CD8-positive, alpha-beta T cell (primary cell): ENCODE measurements at regions of chrX and their contacts with region 1.

Region 1: DNA sequence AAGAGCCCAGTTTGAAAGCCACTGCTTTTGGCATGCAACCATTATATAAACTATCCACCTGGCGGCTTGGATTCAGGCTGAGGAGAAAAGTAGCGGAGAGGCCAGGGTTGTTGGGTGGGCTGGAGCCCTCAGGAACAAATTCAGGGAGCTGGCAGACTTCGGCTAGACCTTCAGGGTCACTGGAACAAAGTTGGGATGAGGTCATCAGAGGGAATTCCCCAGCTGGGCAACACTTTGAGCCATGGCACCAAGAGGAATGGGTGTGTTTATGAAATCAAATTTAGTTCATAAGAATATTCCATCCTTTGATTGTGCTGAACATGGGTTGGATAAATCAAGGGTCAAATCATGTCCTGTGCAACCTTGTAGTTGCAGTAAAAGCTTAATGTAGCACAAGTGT is 22.0 kb downstream of the MTMR1 start:
- DNase-seq: no peak
- ATAC-seq: no peak
- H3K4me3 ChIP-seq: no peak overlapping the region
- H3K4me3 Mint-ChIP-seq: no peak overlapping the region
- H3K27ac ChIP-seq: no peak overlapping the region
- H3K27ac Mint-ChIP-seq: peak overlapping the region; percentile 49
- H3K4me1 ChIP-seq: no peaks in the 10 kb centered on the region
- H3K4me1 Mint-ChIP-seq: peaks cover 50% of the 10 kb centered on the region
- H3K27me3 ChIP-seq: no peaks in the 10 kb centered on the region
- H3K27me3 Mint-ChIP-seq: no peaks in the 10 kb centered on the region
- CTCF ChIP-seq: no peak

Region 2: GRCh38 chrX:150664290-150664689 is 50.9 kb before region 1 on chrX:
- CTCF ChIA-PET with region 1: no interaction called
- POLR2A ChIA-PET with region 1: no interaction called
- intact Hi-C with region 1: loop called (anchors 10 kb)
- DNase-seq: no peak
- ATAC-seq: no peak
- H3K4me3 ChIP-seq: no peak overlapping the region
- H3K4me3 Mint-ChIP-seq: no peak overlapping the region
- H3K27ac ChIP-seq: no peak overlapping the region
- H3K27ac Mint-ChIP-seq: no peak overlapping the region
- H3K4me1 ChIP-seq: no peaks in the 10 kb centered on the region
- H3K4me1 Mint-ChIP-seq: no peaks in the 10 kb centered on the region
- H3K27me3 ChIP-seq: no peaks in the 10 kb centered on the region
- H3K27me3 Mint-ChIP-seq: no peaks in the 10 kb centered on the region
- CTCF ChIP-seq: no peak

Region 3: DNA sequence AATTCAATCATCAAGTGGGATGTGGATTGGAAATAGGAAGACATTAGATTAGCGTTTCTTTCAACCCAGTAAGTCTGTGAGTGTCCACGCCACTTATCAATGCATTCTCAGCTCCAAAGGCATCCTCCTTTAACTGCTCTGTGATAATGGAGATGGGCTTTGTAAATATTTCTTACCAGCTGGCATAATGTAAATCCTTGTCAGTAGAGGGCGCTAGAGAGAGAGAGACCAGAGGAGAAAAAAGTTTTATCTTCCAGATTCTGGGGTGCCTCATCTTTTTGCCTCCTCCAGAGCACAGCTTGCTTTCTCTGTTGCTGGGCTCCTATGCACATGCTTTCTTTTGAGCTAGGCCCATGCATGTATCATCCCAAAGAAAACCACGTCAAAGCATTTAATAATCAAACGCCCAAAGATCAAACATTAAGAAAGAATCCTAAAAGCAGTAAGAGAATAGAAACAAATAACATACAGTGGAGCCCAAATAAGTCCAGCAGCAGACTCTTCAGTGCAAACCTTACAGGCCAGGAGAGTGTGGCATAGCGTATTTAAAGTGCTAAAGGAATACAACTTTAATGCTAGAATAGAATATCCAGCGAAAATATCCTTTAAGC is 31.5 kb before region 1 on chrX:
- CTCF ChIA-PET with region 1: interaction called, 55 read pairs
- POLR2A ChIA-PET with region 1: no interaction called
- intact Hi-C with region 1: loop called (anchors 1 kb)
- DNase-seq: peak in 4 of 9 experiments; percentile 23 to 74 (median 48)
- ATAC-seq: peak; percentile 62
- H3K4me3 ChIP-seq: no peak overlapping the region
- H3K4me3 Mint-ChIP-seq: no peak overlapping the region
- H3K27ac ChIP-seq: no peak overlapping the region
- H3K27ac Mint-ChIP-seq: no peak overlapping the region
- H3K4me1 ChIP-seq: peaks cover 10% of the 10 kb centered on the region
- H3K4me1 Mint-ChIP-seq: peaks cover 10% of the 10 kb centered on the region
- H3K27me3 ChIP-seq: no peaks in the 10 kb centered on the region
- H3K27me3 Mint-ChIP-seq: no peaks in the 10 kb centered on the region
- CTCF ChIP-seq: peak; percentile 59

Region 4: DNA sequence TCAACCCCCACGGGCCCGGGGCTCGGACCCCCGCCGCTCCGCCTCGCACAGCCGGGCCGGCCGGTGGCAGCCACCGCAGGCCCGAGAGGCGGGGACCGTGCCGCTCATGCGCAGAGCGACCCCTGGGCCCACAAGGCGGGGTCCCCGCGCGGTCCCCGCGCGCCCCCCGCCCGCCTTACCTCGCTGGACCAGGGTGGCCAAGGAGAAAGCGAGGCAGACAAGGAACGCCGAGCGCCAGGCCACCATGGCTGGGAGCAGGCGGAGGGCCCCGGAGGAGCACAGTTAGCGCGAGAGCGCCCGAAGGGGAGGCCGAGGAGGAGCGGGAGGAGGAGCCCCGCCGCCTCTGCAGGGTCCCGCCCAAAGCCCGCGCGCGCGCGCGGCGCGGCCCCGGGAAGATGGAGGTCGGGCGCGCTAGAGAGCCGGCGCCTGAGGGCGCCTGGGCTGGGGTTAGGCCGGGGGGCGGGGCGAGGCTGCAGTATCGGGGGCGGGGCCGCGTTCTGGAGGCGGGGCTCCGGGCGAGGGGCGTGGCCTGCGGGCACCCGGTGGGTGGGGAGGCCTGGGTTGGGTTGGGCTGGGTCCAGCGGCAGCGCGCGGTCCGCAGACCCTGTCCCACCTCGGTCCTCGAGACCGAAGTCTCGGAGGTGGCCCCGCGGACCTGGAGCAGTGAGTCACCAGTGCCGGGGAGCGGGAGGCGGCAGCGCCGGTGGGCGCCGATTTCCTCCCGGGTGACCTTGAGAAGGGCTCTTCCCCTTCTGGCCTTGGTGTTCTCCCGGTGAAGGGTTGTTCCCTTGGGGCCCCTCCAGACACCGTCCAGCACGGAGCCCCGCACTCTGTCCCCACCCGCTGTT is 183.4 kb after region 1 on chrX and contains the start of gene CD99L2:
- CTCF ChIA-PET with region 1: no interaction called
- POLR2A ChIA-PET with region 1: no interaction called
- intact Hi-C with region 1: loop called in 1 of 2 experiments (anchors 2 kb)
- DNase-seq: peak; percentile 83 to 93 (median 89)
- ATAC-seq: peak; percentile 92
- H3K4me3 ChIP-seq: peak within 1 kb of the TSS; percentile 76 to 77
- H3K4me3 Mint-ChIP-seq: peak within 1 kb of the TSS; percentile 91
- H3K27ac ChIP-seq: peak within 1 kb of the TSS; percentile 36 to 63
- H3K27ac Mint-ChIP-seq: peak within 1 kb of the TSS; percentile 67
- H3K4me1 ChIP-seq: peaks cover 6% of the 10 kb centered on the region
- H3K4me1 Mint-ChIP-seq: peaks cover 11% of the 10 kb centered on the region
- H3K27me3 ChIP-seq: no peaks in the 10 kb centered on the region
- H3K27me3 Mint-ChIP-seq: no peaks in the 10 kb centered on the region
- CTCF ChIP-seq: no peak
- total RNA-seq, gene CD99L2: 6.4 TPM